ENCODE measurements at regions of chr17 and their contacts with region 1.

Region 1: DNA sequence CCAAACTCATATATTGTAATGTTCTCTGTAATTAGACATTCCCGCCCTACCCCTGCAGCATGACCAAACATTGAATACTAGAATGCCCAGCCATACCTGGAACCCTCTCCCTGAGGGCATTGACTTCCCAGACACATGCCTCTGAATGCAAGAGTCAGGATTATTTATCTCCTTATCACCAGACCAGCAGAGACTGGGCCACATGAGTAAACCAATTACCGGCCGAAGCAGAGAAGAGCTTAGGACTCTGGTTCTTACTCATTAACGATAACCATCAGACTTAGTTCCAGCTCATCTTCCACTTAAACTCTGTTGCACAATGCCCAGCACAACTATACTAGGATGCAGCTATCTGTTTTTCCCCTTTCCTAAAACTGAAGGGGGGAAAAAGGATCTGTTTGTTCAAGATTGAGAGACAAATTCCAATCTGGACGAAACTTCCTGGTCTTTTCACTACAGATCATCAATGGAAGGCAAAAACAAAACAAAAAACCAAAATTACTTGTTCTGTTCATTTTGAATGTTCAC is 88.2 kb upstream of the CORO6 start:
- DNase-seq: peak; percentile 95
- H3K4me3 ChIP-seq: no peak overlapping the region
- H3K27ac ChIP-seq: peak overlapping the region; percentile 38
- H3K4me1 ChIP-seq: peaks cover 27% of the 10 kb centered on the region
- H3K27me3 ChIP-seq: no peaks in the 10 kb centered on the region
- CTCF ChIP-seq: no peak

Region 2: DNA sequence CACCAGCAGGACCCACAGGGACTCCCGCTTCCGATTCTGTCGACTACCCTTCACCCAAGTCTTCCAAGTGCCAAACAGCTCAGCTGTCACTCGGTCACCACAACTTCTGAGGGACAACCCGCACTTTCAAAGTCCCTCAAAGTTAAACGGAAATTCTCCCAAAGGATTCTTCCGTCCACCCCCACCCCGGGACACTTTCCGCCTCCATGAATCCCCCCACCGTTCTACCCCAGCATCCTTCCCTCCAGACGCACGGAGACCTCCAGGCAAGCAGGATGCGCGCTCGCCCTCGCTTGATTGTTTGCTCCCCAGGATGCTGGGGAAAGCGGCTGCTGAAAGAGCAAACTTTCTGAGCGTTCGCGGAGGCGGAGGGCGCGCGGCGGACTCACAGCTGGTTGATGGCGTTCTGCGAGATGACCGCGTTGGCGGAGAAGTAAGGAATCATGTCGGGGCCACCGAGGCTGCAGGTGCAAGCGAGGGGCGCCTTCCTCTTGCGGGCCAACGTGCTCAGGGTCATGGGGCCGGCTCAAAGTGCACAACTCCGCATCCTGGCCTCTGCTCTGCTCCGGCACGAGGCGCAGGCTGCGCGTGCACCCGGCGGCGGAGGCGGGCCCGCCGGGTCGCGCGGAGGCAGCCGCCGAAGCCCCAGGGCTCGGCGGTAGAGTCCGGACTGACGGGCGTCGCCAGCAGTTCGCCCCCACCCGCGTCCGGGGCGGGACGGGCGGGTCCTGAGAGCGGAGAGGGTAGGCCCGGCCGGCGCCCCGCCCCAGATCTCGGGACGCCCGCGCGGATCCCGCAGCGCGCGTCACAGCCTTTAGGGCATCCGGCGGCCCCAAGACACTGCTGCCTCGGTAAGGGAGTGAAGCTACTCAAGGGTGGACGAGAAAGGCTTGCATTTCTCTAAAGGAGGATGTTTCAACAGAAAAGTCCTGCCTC is 50.1 kb after region 1 on chr17:
- CTCF ChIA-PET with region 1: no interaction called
- dilution Hi-C with region 1: loop called (anchors 5 kb)
- in situ Hi-C with region 1: no loop called
- intact Hi-C with region 1: loop called (anchors 2 kb)
- DNase-seq: peak; percentile 82
- H3K4me3 ChIP-seq: peak overlapping the region; percentile 81 to 89 (median 85)
- H3K27ac ChIP-seq: peak overlapping the region; percentile 53
- H3K4me1 ChIP-seq: peaks cover 11% of the 10 kb centered on the region
- H3K27me3 ChIP-seq: no peaks in the 10 kb centered on the region
- CTCF ChIP-seq: no peak

Measured in mammary epithelial cell (primary cell).